PC-9 (cell line): ENCODE measurements at regions of chr1 and their contacts with region 1.

Region 1: DNA sequence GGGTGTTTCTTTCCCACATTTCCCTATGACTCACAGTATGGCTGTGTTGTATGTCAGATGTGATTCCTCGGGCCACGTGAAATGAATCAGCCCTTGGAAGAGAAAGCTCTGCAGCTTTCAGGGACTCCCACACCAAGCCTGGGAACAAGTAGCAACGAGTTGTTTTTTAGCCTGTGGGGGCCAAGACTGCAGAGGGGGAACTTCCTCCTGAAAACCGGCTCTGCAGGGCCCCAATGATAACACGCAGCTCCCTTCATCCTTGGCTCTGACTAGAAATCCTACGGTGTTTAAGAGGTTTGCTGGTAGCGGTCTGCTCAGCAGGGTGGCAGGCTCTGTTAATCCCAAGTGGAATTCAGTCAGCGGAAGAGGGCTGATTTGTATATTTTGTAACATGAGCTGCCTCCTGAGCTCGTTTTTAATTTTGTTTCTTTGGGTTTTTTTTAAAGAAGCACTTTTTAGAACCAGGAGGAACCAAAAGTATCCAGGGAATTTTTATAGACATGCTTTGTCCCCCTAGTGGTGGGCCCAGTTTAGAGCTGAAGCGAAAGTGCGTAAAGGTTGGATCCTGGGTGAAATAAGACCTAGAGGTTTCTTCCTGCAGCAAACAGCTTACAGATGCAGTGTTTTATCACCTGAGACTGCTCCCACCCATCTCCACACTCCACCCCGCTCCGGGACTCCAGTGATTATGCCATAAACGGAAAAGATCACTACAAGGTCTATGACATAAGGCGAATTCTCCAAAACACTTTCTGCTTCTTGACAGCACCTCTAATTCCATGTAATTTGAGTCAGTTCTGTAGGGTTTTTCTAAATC is 48.8 kb downstream of the LAMC2 start:
- DNase-seq: peak; percentile 81 to 96
- H3K4me3 ChIP-seq: peak overlapping the region; percentile 45; the same call in 1 of the 2 replicates
- H3K27ac ChIP-seq: peak overlapping the region; percentile 92
- H3K4me1 ChIP-seq: peaks cover 41% of the 10 kb centered on the region
- H3K27me3 ChIP-seq: no peaks in the 10 kb centered on the region
- CTCF ChIP-seq: peak; percentile 77

Region 2: GRCh38 chr1:183185941-183186490 is 48.9 kb before region 1 on chr1 and contains the start of gene LAMC2:
- CTCF ChIA-PET with region 1: no interaction called
- POLR2A ChIA-PET with region 1: no interaction called
- intact Hi-C with region 1: loop called (anchors 2 kb)
- DNase-seq: peak; percentile 89 to 98
- H3K4me3 ChIP-seq: peak within 1 kb of the TSS; percentile 75
- H3K27ac ChIP-seq: peak within 1 kb of the TSS; percentile 85
- H3K4me1 ChIP-seq: peaks cover 42% of the 10 kb centered on the region
- H3K27me3 ChIP-seq: no peaks in the 10 kb centered on the region
- CTCF ChIP-seq: peak; percentile 63
- total RNA-seq, gene LAMC2: 105 and 109 TPM in 2 replicates

Region 3: DNA sequence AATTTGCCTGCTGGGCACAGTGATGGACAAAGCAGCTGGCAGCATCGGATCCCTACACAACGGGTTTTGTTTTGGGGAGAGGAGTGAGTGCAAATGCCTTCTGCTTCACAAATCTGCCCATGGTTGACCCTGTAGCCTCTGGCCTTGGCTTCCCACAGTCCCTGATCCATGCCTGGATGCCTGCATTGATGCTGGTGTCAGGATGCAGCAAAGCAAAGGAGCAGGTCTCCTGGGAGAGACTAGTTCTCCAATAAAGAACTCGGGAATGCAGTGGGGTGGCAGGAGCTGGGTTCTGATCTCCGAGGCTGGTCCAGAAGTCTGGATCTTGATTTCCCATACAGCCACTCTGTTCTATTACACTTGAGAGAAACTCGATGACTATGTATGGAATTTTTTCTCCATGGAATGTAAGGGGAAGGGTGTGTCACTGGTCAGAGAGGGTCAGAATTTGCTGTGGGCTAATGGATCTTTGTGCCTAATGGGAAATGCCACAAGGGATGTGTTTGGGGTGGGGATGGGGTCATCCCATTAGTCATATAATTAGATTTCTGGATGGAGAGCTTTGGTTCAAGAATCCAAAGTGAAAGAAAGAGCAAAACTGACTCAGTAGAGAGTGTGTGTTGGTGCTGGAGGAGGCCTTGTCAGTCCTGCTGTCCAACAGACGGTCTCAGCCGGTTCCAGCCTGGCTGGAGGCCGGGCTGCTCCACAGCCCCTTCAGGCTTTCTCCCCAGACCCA is 37.4 kb after region 1 on chr1:
- CTCF ChIA-PET with region 1: interaction called, 3 read pairs
- POLR2A ChIA-PET with region 1: no interaction called
- intact Hi-C with region 1: loop called (anchors 1 kb)
- DNase-seq: peak; percentile 61 to 85
- H3K4me3 ChIP-seq: no peak overlapping the region
- H3K27ac ChIP-seq: peak overlapping the region; percentile 92
- H3K4me1 ChIP-seq: peaks cover 46% of the 10 kb centered on the region
- H3K27me3 ChIP-seq: no peaks in the 10 kb centered on the region
- CTCF ChIP-seq: no peak